B cell (primary cell): ENCODE measurements at regions of chr10 and their contacts with region 1.

Region 1: GRCh38 chr10:71696628-71697326 is 22.8 kb downstream of the C10orf105 start:
- DNase-seq: peak; percentile 69
- ATAC-seq: no peak
- H3K4me3 ChIP-seq: no peak overlapping the region
- H3K4me3 Mint-ChIP-seq: no peak overlapping the region
- H3K27ac ChIP-seq: no peak overlapping the region
- H3K27ac Mint-ChIP-seq: peak overlapping the region; percentile 20
- H3K4me1 ChIP-seq: peaks cover 39 to 55% of the 10 kb centered on the region in 2 donors
- H3K4me1 Mint-ChIP-seq: peaks cover 53% of the 10 kb centered on the region
- H3K27me3 ChIP-seq: peaks cover 0 to 6% (median 0%) of the 10 kb centered on the region in 4 experiments
- H3K27me3 Mint-ChIP-seq: no peaks in the 10 kb centered on the region
- CTCF ChIP-seq: peak; percentile 84

Region 2: GRCh38 chr10:71378336-71379117 is 318.2 kb before region 1 on chr10:
- CTCF ChIA-PET with region 1: interaction called, 4 read pairs
- POLR2A ChIA-PET with region 1: no interaction called
- intact Hi-C with region 1: loop called (anchors 5 kb)
- DNase-seq: peak; percentile 70
- ATAC-seq: no peak
- H3K4me3 ChIP-seq: peak overlapping the region in 1 of 5 experiments; percentile 22
- H3K4me3 Mint-ChIP-seq: peak overlapping the region; percentile 65
- H3K27ac ChIP-seq: peak overlapping the region; percentile 11 to 48
- H3K27ac Mint-ChIP-seq: peak overlapping the region; percentile 84
- H3K4me1 ChIP-seq: peaks cover 31 to 47% of the 10 kb centered on the region in 2 donors
- H3K4me1 Mint-ChIP-seq: peaks cover 37% of the 10 kb centered on the region
- H3K27me3 ChIP-seq: no peaks in the 10 kb centered on the region
- H3K27me3 Mint-ChIP-seq: no peaks in the 10 kb centered on the region
- CTCF ChIP-seq: no peak

Region 3: DNA sequence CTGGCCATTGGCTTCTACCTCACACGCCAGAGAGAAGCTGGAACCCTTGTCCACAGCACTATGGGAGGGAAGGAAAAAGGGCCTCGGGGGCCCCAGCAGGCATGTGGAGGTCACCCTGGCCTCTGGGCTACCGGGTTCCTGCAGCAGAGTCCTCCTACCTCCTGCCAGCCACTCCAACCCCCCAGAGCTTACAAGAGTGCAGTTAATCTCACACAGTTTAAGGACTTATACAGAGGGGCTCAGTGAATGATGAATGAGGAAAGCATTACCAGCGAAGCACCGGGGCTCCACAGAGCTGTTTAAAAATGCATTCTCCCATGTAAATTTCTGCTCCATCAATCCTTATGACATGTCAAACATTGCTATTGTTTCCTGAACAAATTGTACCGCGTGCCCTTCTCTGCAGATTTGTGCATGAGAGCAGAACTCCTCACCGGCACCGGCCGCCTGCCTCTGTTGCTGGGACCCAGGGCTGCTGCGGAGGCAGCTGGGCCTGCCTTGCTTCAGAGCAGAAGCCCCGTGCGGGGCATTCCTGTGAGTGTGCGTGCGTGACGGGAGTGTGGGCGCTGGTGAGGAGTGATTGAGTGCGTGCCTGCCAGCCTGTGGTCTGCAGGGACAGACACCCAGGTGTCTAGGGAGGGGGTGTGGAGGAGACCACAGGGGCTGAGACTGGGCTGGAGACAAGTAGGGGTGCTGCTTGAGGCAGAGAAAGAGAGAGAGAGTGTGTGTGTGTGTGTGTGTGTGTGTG is 30.0 kb before region 1 on chr10:
- CTCF ChIA-PET with region 1: interaction called, 11 read pairs
- POLR2A ChIA-PET with region 1: no interaction called
- intact Hi-C with region 1: loop called (anchors 2 kb)
- DNase-seq: peak; percentile 55
- ATAC-seq: peak; percentile 46
- H3K4me3 ChIP-seq: no peak overlapping the region
- H3K4me3 Mint-ChIP-seq: peak overlapping the region; percentile 0
- H3K27ac ChIP-seq: no peak overlapping the region
- H3K27ac Mint-ChIP-seq: peak overlapping the region; percentile 2
- H3K4me1 ChIP-seq: peaks cover 19 to 22% of the 10 kb centered on the region in 2 donors
- H3K4me1 Mint-ChIP-seq: peaks cover 17% of the 10 kb centered on the region
- H3K27me3 ChIP-seq: no peaks in the 10 kb centered on the region
- H3K27me3 Mint-ChIP-seq: no peaks in the 10 kb centered on the region
- CTCF ChIP-seq: no peak

Region 4: DNA sequence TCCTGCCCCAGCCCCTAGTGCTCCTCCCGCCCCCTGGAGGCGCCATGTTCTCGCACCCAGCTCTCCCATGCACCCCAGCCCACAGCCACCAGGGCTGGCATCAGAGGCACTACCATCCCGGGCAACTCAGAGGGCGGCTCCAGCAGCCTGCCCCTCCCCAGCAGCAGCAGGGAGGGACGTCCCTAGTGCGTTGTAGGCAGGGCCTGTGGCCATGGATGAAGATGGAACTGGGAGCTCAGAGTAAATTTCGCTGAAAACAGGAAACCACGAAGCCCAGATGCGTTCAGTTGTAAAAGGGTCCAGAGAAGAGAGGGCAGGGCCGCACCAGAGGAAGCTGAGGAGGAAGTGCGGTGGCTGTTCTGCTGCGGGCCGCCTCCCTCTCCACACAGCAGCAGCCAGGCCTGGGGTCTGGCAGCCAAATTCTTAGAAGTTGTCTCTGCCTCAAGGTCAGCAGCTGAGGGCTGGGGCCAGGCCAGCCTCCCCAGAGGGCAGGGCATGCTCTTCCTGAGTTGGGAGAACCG is 52.0 kb after region 1 on chr10:
- CTCF ChIA-PET with region 1: interaction called, 8 read pairs
- POLR2A ChIA-PET with region 1: interaction called, 3 read pairs
- intact Hi-C with region 1: loop called (anchors 1 kb)
- DNase-seq: peak; percentile 84
- ATAC-seq: peak; percentile 80
- H3K4me3 ChIP-seq: peak overlapping the region in 1 of 5 experiments; percentile 15
- H3K4me3 Mint-ChIP-seq: peak overlapping the region; percentile 84
- H3K27ac ChIP-seq: peak overlapping the region; percentile 72 to 84
- H3K27ac Mint-ChIP-seq: peak overlapping the region; percentile 100
- H3K4me1 ChIP-seq: peaks cover 83 to 92% of the 10 kb centered on the region in 2 donors
- H3K4me1 Mint-ChIP-seq: peaks cover 89% of the 10 kb centered on the region
- H3K27me3 ChIP-seq: no peaks in the 10 kb centered on the region
- H3K27me3 Mint-ChIP-seq: no peaks in the 10 kb centered on the region
- CTCF ChIP-seq: no peak

Region 5: GRCh38 chr10:71771821-71772617 is 75.2 kb after region 1 on chr10:
- CTCF ChIA-PET with region 1: interaction called, 34 read pairs
- POLR2A ChIA-PET with region 1: interaction called, 11 read pairs
- intact Hi-C with region 1: loop called (anchors 1 kb)
- DNase-seq: peak; percentile 27
- ATAC-seq: no peak
- H3K4me3 ChIP-seq: peak overlapping the region; percentile 82 to 97 (median 90)
- H3K4me3 Mint-ChIP-seq: peak overlapping the region; percentile 94
- H3K27ac ChIP-seq: peak overlapping the region; percentile 88 to 95
- H3K27ac Mint-ChIP-seq: peak overlapping the region; percentile 92
- H3K4me1 ChIP-seq: peaks cover 90 to 98% of the 10 kb centered on the region in 2 donors
- H3K4me1 Mint-ChIP-seq: peaks cover 93% of the 10 kb centered on the region
- H3K27me3 ChIP-seq: no peaks in the 10 kb centered on the region
- H3K27me3 Mint-ChIP-seq: no peaks in the 10 kb centered on the region
- CTCF ChIP-seq: no peak

Region 6: DNA sequence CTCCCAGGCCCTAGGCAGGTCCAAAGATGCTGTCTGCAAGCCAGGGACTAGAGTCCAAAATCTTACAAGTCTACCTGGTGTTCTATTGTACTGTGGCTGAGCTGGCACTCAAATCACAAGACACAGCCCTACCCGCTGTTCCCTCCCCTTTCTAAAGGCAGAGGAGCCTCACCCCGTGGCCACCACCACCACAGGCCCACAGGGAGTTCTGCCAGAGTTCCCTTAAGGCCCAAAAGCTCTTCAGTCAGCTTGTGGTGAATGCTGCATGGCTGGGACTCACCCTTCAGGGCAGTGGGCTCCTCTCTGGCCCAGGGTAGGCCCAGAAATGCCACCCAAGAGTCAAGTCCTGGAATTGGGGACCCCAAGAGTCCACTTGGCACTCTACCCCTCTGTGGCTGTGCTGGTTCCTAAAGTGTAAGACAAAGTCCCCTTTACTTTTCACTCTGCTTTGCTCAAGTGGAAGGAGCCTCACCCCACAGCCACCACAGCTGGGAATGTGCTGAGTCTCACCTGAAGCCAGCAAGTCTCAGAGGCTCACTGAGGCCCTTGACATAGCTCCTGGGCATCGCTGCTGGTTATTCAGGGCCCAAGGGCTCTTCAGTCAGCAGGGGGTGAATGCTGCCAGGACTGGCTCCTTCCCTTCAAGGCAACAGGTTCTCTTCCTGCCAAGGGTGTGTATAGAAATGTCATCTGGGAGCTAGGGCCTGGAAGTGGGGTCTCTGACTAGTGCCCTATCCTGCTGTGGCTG is 203.1 kb after region 1 on chr10:
- CTCF ChIA-PET with region 1: interaction called, 8 read pairs
- POLR2A ChIA-PET with region 1: no interaction called
- intact Hi-C with region 1: loop called (anchors 5 kb)
- DNase-seq: peak; percentile 36
- ATAC-seq: peak; percentile 26
- H3K4me3 ChIP-seq: no peak overlapping the region
- H3K4me3 Mint-ChIP-seq: no peak overlapping the region
- H3K27ac ChIP-seq: no peak overlapping the region
- H3K27ac Mint-ChIP-seq: no peak overlapping the region
- H3K4me1 ChIP-seq: peaks cover 0 to 10% of the 10 kb centered on the region in 2 donors
- H3K4me1 Mint-ChIP-seq: peaks cover 7% of the 10 kb centered on the region
- H3K27me3 ChIP-seq: no peaks in the 10 kb centered on the region
- H3K27me3 Mint-ChIP-seq: no peaks in the 10 kb centered on the region
- CTCF ChIP-seq: no peak